Activated CD4-positive, alpha-beta T cell treated with anti-CD3 and anti-CD28 coated beads for 36 hours (primary cell): ENCODE measurements at regions of chr12 and their contacts with region 1.

Region 1: GRCh38 chr12:122471324-122472226 is 29.2 kb downstream of the ZCCHC8 start:
- DNase-seq: no peak
- ATAC-seq: peak; percentile 40
- H3K4me3 Mint-ChIP-seq: no peak overlapping the region
- H3K27ac Mint-ChIP-seq: no peak overlapping the region
- H3K4me1 Mint-ChIP-seq: peaks cover 28% of the 10 kb centered on the region
- H3K27me3 Mint-ChIP-seq: no peaks in the 10 kb centered on the region

Region 2: GRCh38 chr12:122336015-122336946 is 135.3 kb before region 1 on chr12:
- CTCF ChIA-PET with region 1: interaction called, 9 read pairs
- POLR2A ChIA-PET with region 1: no interaction called
- intact Hi-C with region 1: loop called in 1 of 2 experiments (anchors 1 kb)
- DNase-seq: peak; percentile 76
- ATAC-seq: no peak
- H3K4me3 Mint-ChIP-seq: no peak overlapping the region
- H3K27ac Mint-ChIP-seq: peak overlapping the region; percentile 73
- H3K4me1 Mint-ChIP-seq: peaks cover 12% of the 10 kb centered on the region
- H3K27me3 Mint-ChIP-seq: no peaks in the 10 kb centered on the region

Region 3: GRCh38 chr12:122421821-122422729 is 49.5 kb before region 1 on chr12 and contains the start of gene CLIP1:
- CTCF ChIA-PET with region 1: interaction called, 13 read pairs
- POLR2A ChIA-PET with region 1: no interaction called
- intact Hi-C with region 1: loop called in 1 of 2 experiments (anchors 1 kb)
- DNase-seq: peak; percentile 77
- ATAC-seq: peak; percentile 74
- H3K4me3 Mint-ChIP-seq: peak within 1 kb of the TSS; percentile 91
- H3K27ac Mint-ChIP-seq: peak within 1 kb of the TSS; percentile 89
- H3K4me1 Mint-ChIP-seq: peaks cover 37% of the 10 kb centered on the region
- H3K27me3 Mint-ChIP-seq: no peaks in the 10 kb centered on the region
- total RNA-seq, gene CLIP1: 53.9 to 58.6 TPM

Region 4: GRCh38 chr12:122449353-122449752 is 22.2 kb before region 1 on chr12:
- CTCF ChIA-PET with region 1: interaction called, 11 read pairs
- POLR2A ChIA-PET with region 1: interaction called, 3 read pairs
- intact Hi-C with region 1: loop called in 1 of 2 experiments (anchors 1 kb)
- DNase-seq: peak; percentile 35
- ATAC-seq: peak; percentile 55
- H3K4me3 Mint-ChIP-seq: no peak overlapping the region
- H3K27ac Mint-ChIP-seq: no peak overlapping the region
- H3K4me1 Mint-ChIP-seq: peaks cover 28% of the 10 kb centered on the region
- H3K27me3 Mint-ChIP-seq: no peaks in the 10 kb centered on the region

Region 5: GRCh38 chr12:122459211-122459610 is 12.4 kb before region 1 on chr12:
- CTCF ChIA-PET with region 1: interaction called, 15 read pairs
- POLR2A ChIA-PET with region 1: interaction called, 3 read pairs
- intact Hi-C with region 1: no loop called
- DNase-seq: no peak
- ATAC-seq: no peak
- H3K4me3 Mint-ChIP-seq: no peak overlapping the region
- H3K27ac Mint-ChIP-seq: no peak overlapping the region
- H3K4me1 Mint-ChIP-seq: peaks cover 5% of the 10 kb centered on the region
- H3K27me3 Mint-ChIP-seq: no peaks in the 10 kb centered on the region